Thyroid gland (tissue), 4 donors: ENCODE measurements at regions of chr11 and their contacts with region 1.

Region 1: DNA sequence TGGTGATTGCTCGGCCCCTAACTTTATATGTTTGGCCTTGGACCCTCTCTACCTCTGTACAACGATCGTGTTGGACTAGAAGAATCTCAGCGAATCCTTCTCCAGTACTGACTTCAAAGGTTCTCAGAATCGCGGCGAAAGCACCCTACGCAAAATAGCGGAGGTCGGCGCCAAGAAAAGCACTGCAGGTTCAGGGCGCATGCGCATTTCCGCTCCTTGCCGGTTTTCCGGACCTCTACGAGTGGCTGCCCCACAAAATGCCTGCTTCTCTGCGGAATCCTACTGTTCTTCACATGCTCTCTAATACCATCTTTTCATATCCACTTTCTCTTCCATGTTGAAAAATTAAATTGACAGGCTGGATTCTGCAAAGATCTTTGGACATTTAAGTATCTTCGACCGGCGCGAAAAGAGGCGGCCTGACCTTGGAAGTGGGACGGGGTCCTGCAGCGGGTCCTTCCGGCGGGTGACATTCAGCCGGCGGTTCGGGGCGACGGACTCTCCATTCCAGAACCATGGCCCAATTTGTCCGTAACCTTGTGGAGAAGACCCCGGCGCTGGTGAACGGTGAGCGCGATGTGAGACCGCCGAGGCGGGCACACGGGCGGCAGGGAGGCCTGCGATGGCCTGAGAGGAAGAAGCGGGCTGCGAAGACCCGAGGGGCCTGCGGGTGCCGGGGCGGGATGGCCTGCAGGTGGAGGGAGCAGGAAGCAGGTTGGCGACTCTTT is at the start of gene ATP5MG:
- DNase-seq: peak; percentile 91 to 94
- H3K4me3 ChIP-seq: peak within 1 kb of the TSS; percentile 59 to 90 (median 71)
- H3K27ac ChIP-seq: peak within 1 kb of the TSS; percentile 88 to 93 (median 90)
- H3K4me1 ChIP-seq: peaks cover 16 to 17% of the 10 kb centered on the region in 2 donors
- H3K27me3 ChIP-seq: no peaks in the 10 kb centered on the region
- CTCF ChIP-seq: peak in 2 of 6 experiments; percentile 17 to 22
- POLR2A ChIP-seq: peak in 1 of 2 donors; percentile 69
- total RNA-seq, gene ATP5MG: 63.9 to 716 (median 170) TPM

Region 2: DNA sequence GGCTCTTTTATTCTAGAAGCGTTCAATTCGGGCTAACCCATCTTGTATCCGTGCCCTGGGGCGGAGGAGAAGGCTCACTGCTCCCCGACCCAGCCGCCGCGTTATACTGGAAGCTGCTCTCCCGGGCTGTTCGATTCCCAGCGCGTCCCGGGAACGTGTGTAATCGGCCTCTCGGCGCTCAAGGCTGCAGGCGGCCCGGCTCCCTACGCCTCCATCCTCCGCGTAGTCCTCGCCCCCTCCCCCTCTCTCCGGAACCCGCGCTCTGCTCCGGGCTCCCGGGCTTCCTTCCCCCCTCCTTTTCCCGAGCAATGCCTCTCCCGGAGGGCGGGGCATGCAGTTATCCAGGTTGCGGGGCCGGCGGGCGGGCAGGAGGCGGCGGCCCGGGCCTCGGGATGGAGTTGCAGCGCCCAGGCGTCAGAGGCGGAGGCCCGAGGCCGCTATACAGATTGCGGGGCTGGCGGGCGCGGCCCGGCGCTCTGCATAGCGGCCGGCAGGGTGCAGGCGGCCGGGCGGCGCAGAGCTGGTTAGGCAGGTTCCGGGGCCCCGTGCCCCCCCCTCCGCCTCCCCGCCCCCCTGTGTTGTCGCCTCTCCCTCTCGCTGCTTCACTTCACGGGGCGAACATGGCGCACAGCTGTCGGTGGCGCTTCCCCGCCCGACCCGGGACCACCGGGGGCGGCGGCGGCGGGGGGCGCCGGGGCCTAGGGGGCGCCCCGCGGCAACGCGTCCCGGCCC is 34.7 kb after region 1 on chr11 and contains the start of gene KMT2A:
- intact Hi-C with region 1: loop called (anchors 2 kb)
- DNase-seq: peak; percentile 98
- H3K4me3 ChIP-seq: peak within 1 kb of the TSS; percentile 51 to 95 (median 79)
- H3K27ac ChIP-seq: peak within 1 kb of the TSS; percentile 71 to 91 (median 91)
- H3K4me1 ChIP-seq: peaks cover 22 to 35% of the 10 kb centered on the region in 2 donors
- H3K27me3 ChIP-seq: no peaks in the 10 kb centered on the region
- CTCF ChIP-seq: peak in 3 of 6 experiments; percentile 35 to 99 (median 60)
- POLR2A ChIP-seq: peak in 1 of 2 donors; percentile 44
- total RNA-seq, gene KMT2A: 74.5 to 175 (median 90.8) TPM

Region 3: DNA sequence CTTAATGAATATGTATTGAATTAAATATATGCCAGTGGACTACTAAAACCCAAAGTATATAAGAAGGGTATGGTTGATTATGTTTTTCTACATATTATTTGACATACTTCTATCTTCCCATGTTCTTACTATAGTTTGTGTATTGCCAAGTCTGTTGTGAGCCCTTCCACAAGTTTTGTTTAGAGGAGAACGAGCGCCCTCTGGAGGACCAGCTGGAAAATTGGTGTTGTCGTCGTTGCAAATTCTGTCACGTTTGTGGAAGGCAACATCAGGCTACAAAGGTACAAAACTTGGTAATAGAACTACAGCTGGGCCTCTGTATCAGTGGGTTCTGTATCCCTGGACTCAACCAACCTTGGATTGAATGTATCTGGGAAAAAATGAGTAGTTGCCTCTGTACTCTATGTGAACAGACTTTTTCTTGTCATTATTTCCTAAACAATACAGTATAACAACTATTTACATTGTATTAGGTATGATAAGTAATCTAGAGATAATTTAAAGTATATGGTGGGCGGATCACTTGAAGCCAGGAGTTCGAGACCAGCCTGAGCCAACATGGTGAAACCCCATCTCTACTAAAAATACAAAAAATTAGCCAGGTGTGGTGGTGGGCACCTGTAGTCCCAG is 87.3 kb after region 1 on chr11:
- intact Hi-C with region 1: loop called (anchors 10 kb)
- DNase-seq: peak; percentile 34 to 69
- H3K4me3 ChIP-seq: no peak overlapping the region
- H3K27ac ChIP-seq: no peak overlapping the region
- H3K4me1 ChIP-seq: no peaks in the 10 kb centered on the region
- H3K27me3 ChIP-seq: no peaks in the 10 kb centered on the region
- CTCF ChIP-seq: peak in 5 of 6 experiments; percentile 32 to 78 (median 75)
- POLR2A ChIP-seq: no peak